Heart right ventricle (tissue), 16 donors: ENCODE measurements at regions of chr3 and their contacts with region 1.

Region 1: DNA sequence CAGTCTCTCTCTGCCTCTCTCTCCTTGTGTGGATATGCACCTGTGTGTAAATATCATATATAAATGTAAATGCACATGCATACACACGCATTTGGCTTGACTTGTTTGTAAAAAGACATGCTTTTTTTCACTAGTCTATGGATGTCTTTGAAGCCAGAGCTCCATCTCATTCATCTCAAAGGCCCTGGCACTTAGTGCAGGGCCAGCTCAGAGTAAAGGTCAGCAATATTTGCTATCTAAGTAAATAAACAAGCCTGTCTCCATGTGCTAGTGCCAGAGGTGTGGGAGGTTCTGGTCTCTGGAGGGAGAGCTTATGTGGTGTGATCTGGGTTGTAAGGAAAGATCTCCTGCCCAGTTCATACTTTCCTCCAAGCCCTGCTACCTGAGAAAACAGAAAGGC is 5.6 kb downstream of the CLSTN2 start:
- DNase-seq: peak in 1 of 2 donors; percentile 17
- ATAC-seq: peak in 6 of 8 donors; percentile 63 to 89 (median 76)
- H3K4me3 ChIP-seq: no peak overlapping the region
- H3K27ac ChIP-seq: peak overlapping the region in 1 of 10 donors; percentile 26
- H3K4me1 ChIP-seq: peaks cover 0 to 40% (median 12%) of the 10 kb centered on the region in 9 donors
- H3K27me3 ChIP-seq: peaks cover 0 to 30% (median 9%) of the 10 kb centered on the region in 7 donors
- CTCF ChIP-seq: no peak

Region 2: DNA sequence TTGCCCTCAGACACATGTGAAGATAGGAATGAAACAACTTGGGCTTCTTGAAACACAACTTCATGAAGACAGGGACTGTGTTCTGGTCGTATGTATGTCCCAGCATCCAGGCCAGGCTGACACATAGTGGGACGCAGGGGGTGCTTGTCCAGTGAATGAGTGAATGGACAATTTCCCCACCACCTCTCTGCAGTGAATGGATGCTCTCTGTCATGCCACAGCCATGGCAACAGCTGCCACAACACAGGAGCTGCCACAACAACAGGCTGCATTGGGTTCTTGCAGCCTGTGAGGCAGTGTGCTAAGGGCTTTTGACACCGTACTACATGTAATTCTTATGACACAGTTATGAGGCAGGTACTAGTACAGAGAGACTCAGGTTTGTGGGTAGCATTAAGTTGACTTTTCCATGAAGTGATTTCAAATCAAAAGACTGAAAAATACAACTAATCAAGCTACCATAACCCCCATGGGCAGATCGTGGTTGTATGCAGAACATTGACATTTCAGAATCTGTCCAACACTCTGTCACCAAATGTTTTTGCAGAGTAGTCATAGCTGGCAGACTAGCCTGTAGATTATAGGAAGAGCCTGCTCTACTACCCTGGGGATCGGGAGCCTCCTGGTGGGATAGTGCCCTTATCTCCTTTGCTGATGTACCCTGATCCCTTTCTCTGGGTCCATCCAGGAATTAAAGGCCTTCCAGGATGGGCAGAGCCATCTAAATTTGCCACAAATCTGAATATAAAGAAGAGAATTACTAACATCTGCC is 35.2 kb after region 1 on chr3:
- intact Hi-C with region 1: loop called in 2 of 10 experiments (anchors 5 kb)
- DNase-seq: peak; percentile 17 to 37
- ATAC-seq: peak; percentile 71 to 96 (median 90)
- H3K4me3 ChIP-seq: no peak overlapping the region
- H3K27ac ChIP-seq: peak overlapping the region in 4 of 10 donors; percentile 0 to 60 (median 41)
- H3K4me1 ChIP-seq: peaks cover 0 to 30% (median 10%) of the 10 kb centered on the region in 9 donors
- H3K27me3 ChIP-seq: no peaks in the 10 kb centered on the region
- CTCF ChIP-seq: peak in 2 of 9 donors; percentile 31 to 39